ENCODE measurements at regions of chrX and their contacts with region 1.

Region 1: GRCh38 chrX:11533211-11533651 is 132.5 kb downstream of the ARHGAP6 start:
- DNase-seq: no peak
- ATAC-seq: peak; percentile 69 to 91 (median 86)
- H3K4me3 ChIP-seq: peak overlapping the region in 1 of 12 donors; percentile 28
- H3K27ac ChIP-seq: peak overlapping the region in 2 of 12 donors; percentile 22 to 41
- H3K4me1 ChIP-seq: no peaks in the 10 kb centered on the region
- H3K27me3 ChIP-seq: peaks cover 0 to 6% (median 0%) of the 10 kb centered on the region in 9 donors
- CTCF ChIP-seq: peak; percentile 70 to 94 (median 84)
- POLR2A ChIP-seq: no peak

Region 2: DNA sequence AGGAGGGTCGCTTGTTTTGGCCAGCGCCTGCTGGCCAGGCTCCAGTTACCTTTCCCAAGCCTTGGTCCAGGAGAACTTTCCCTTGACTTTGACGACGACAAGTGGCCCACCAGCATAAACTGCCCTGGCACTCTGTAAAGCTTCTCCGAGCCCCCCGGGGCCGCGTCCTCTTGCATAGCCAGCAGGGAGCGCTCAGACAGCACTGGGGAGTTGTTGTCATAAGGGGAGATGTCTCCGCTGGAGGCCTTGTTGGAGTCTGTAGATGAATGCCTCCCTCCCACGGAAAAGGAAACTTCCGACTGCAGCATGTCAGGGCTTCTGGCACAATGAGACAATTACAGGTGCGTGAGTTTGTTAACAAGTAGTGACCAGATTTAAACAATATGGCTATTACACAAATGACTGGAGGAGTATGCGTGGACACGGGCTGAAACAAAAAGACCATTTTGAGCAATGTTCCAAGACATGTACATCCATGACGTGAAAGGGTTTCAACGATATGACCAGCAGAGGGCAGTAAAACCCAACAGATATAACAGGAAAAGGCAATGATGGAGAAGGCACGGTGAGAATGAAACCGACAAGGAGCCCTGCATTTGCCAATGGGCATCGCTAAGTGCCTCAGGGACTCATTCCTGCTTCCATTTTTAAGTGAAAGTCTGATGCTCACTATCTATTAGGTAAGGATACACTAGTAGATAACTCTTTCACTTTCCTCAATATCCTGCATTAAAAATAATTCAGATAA is 389.1 kb before region 1 on chrX:
- intact Hi-C with region 1: loop called (anchors 2 to 10 kb)
- DNase-seq: peak in 4 of 5 donors; percentile 32 to 43 (median 38)
- ATAC-seq: peak in 3 of 4 donors; percentile 74 to 88 (median 85)
- H3K4me3 ChIP-seq: no peak overlapping the region
- H3K27ac ChIP-seq: no peak overlapping the region
- H3K4me1 ChIP-seq: peaks cover 0 to 4% (median 0%) of the 10 kb centered on the region in 12 donors
- H3K27me3 ChIP-seq: peaks cover 0 to 8% (median 0%) of the 10 kb centered on the region in 9 donors
- CTCF ChIP-seq: peak; percentile 37 to 78 (median 60)
- POLR2A ChIP-seq: no peak

Region 3: GRCh38 chrX:11381464-11381863 is 151.8 kb before region 1 on chrX:
- intact Hi-C with region 1: loop called in 2 of 10 experiments (anchors 5 kb)
- DNase-seq: peak in 3 of 5 donors; percentile 22 to 34 (median 31)
- ATAC-seq: peak in 3 of 4 donors; percentile 73 to 81 (median 74)
- H3K4me3 ChIP-seq: no peak overlapping the region
- H3K27ac ChIP-seq: peak overlapping the region in 2 of 12 donors; percentile 9 to 51
- H3K4me1 ChIP-seq: peaks cover 0 to 24% (median 0%) of the 10 kb centered on the region in 12 donors
- H3K27me3 ChIP-seq: peaks cover 0 to 6% (median 0%) of the 10 kb centered on the region in 9 donors
- CTCF ChIP-seq: peak; percentile 30 to 60 (median 42)
- POLR2A ChIP-seq: no peak

Region 4: GRCh38 chrX:11724122-11725017 is 191.1 kb after region 1 on chrX:
- intact Hi-C with region 1: loop called (anchors 1 to 5 kb)
- DNase-seq: no peak
- ATAC-seq: no peak
- H3K4me3 ChIP-seq: no peak overlapping the region
- H3K27ac ChIP-seq: no peak overlapping the region
- H3K4me1 ChIP-seq: no peaks in the 10 kb centered on the region
- H3K27me3 ChIP-seq: peaks cover 0 to 17% (median 0%) of the 10 kb centered on the region in 9 donors
- CTCF ChIP-seq: peak; percentile 35 to 75 (median 66)
- POLR2A ChIP-seq: no peak

Region 5: DNA sequence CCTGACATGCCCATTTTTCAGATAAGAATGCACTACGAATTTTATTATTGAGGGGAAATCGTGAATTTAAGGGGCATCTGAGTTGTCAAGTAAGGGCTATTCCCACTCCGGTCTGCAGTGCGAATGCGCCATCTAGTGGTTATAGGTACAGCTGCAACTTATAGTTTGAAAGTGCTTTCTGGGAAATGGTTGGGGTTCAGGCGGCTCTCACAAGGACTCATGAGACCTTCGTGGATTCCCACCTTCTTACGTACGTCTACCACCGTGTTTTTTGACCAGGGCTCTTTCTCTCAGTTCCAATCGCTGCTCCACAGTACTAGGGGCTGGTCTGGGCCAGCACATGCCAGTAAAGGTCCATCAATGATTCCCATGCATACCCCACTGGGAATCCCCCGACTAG is 237.1 kb after region 1 on chrX:
- intact Hi-C with region 1: loop called (anchors 1 to 5 kb)
- DNase-seq: peak in 1 of 5 donors; percentile 21
- ATAC-seq: peak in 3 of 4 donors; percentile 34 to 60 (median 57)
- H3K4me3 ChIP-seq: no peak overlapping the region
- H3K27ac ChIP-seq: no peak overlapping the region
- H3K4me1 ChIP-seq: no peaks in the 10 kb centered on the region
- H3K27me3 ChIP-seq: no peaks in the 10 kb centered on the region
- CTCF ChIP-seq: peak; percentile 64 to 85 (median 74)
- POLR2A ChIP-seq: no peak

Region 6: GRCh38 chrX:11908371-11908770 is 375.1 kb after region 1 on chrX:
- intact Hi-C with region 1: loop called in 1 of 10 experiments (anchors 10 kb)
- DNase-seq: no peak
- ATAC-seq: no peak
- H3K4me3 ChIP-seq: no peak overlapping the region
- H3K27ac ChIP-seq: no peak overlapping the region
- H3K4me1 ChIP-seq: no peaks in the 10 kb centered on the region
- H3K27me3 ChIP-seq: no peaks in the 10 kb centered on the region
- CTCF ChIP-seq: peak in 3 of 12 donors; percentile 14 to 29 (median 24)
- POLR2A ChIP-seq: no peak

Measured in heart left ventricle (tissue), 16 donors.